Mammary epithelial cell (primary cell): ENCODE measurements at regions of chr12 and their contacts with region 1.

Region 1: DNA sequence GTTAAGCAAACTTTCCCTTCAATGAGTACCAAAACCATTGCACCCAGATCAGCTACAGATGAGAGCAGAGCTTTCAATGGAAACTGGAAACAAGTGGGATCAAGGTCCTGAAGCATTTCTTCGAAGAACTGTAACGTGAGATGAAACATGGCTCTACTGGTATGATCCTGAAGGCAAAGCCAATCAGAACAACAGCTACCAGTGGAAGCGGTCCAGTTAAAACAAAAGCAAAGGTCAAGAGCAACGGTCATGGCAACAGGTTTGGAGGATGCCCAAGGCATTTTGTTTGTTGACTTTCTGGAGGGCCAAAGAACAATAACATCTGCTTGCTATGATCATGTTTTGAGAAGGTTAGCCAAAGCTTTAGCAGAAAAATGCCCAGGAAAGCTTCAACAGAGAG is 137.9 kb upstream of the CPSF6 start:
- DNase-seq: no peak
- H3K4me3 ChIP-seq: no peak overlapping the region
- H3K27ac ChIP-seq: no peak overlapping the region
- H3K4me1 ChIP-seq: peaks cover 14% of the 10 kb centered on the region
- H3K27me3 ChIP-seq: no peaks in the 10 kb centered on the region
- CTCF ChIP-seq: no peak

Region 2: DNA sequence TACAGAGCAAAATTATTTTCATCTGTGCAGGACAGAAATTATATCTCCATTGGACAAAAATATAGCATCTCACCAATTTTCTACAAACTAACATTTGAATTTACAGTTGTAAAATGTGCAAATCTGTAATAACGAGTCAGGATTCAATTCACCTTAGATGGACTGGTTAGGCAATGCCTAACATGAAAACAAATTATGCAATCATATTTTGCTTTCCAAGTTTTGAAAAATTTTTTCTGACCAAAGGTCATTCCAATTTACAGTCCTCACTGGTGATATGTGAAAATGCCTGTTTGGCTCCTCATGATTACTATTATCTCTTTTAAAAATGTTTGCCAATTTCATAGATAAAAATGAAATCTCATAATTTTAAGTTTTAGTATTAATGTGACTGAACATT is 162.0 kb before region 1 on chr12:
- CTCF ChIA-PET with region 1: no interaction called
- dilution Hi-C with region 1: no loop called
- in situ Hi-C with region 1: no loop called
- intact Hi-C with region 1: no loop called
- DNase-seq: no peak
- H3K4me3 ChIP-seq: no peak overlapping the region
- H3K27ac ChIP-seq: no peak overlapping the region
- H3K4me1 ChIP-seq: no peaks in the 10 kb centered on the region
- H3K27me3 ChIP-seq: no peaks in the 10 kb centered on the region
- CTCF ChIP-seq: no peak

Region 3: GRCh38 chr12:68998041-68998440 is 103.5 kb before region 1 on chr12:
- CTCF ChIA-PET with region 1: no interaction called
- dilution Hi-C with region 1: loop called (anchors 5 kb)
- in situ Hi-C with region 1: no loop called
- intact Hi-C with region 1: no loop called
- DNase-seq: no peak
- H3K4me3 ChIP-seq: no peak overlapping the region
- H3K27ac ChIP-seq: no peak overlapping the region
- H3K4me1 ChIP-seq: peaks cover 9% of the 10 kb centered on the region
- H3K27me3 ChIP-seq: no peaks in the 10 kb centered on the region
- CTCF ChIP-seq: no peak

Region 4: GRCh38 chr12:69655377-69656336 is 554.2 kb after region 1 on chr12:
- CTCF ChIA-PET with region 1: no interaction called
- dilution Hi-C with region 1: no loop called
- in situ Hi-C with region 1: no loop called
- intact Hi-C with region 1: no loop called
- DNase-seq: peak; percentile 76
- H3K4me3 ChIP-seq: no peak overlapping the region
- H3K27ac ChIP-seq: peak overlapping the region; percentile 89
- H3K4me1 ChIP-seq: peaks cover 33% of the 10 kb centered on the region
- H3K27me3 ChIP-seq: no peaks in the 10 kb centered on the region
- CTCF ChIP-seq: no peak